ENCODE measurements at regions of chr7 and their contacts with region 1.

Region 1: DNA sequence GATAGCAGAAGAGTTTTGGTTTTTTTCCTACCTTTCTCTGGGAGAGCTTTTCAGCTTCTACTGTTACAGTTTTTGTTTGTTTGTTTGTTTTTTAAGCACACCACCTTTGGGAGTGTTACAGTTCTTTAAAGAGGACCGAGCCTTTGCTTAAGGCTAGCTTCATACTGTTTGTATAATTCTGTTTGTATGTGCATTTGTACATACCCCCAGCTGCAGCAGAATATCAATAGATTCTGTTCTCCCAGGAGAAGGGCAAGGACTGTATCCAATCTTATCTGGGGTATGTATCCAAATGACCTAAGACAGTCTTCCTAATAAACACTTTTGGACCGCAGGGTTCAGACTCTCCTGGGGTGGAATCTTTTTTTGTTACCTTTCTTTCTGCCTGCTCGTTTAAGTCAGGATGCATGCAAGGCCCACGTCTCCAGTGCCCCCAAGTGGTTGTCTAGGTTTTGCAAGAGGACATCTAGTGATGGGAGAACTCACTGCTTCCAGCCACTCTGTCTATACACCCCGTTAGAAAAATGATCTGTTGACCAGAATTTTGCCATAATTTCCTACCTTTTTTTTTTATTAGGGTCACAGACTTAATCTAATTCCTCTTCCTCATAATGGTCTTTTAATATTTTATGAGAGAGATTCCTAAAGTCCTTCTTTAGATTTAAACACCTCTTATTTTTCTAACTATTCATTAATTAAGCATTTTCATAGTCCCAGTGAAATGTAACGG is 23.9 kb downstream of the NRF1 start:
- DNase-seq: peak; percentile 70
- ATAC-seq: peak; percentile 87
- H3K4me3 ChIP-seq: no peak overlapping the region
- H3K4me3 Mint-ChIP-seq: no peak overlapping the region
- H3K27ac ChIP-seq: peak overlapping the region in 1 of 2 donors; percentile 5
- H3K27ac Mint-ChIP-seq: no peak overlapping the region
- H3K4me1 ChIP-seq: peaks cover 0 to 2% of the 10 kb centered on the region in 2 donors
- H3K4me1 Mint-ChIP-seq: peaks cover 22% of the 10 kb centered on the region
- H3K27me3 ChIP-seq: no peaks in the 10 kb centered on the region
- H3K27me3 Mint-ChIP-seq: no peaks in the 10 kb centered on the region
- CTCF ChIP-seq: peak; percentile 86

Region 2: GRCh38 chr7:129578829-129579228 is 56.6 kb before region 1 on chr7:
- CTCF ChIA-PET with region 1: interaction called, 5 read pairs
- POLR2A ChIA-PET with region 1: no interaction called
- intact Hi-C with region 1: loop called (anchors 2 kb)
- DNase-seq: no peak
- ATAC-seq: no peak
- H3K4me3 ChIP-seq: no peak overlapping the region
- H3K4me3 Mint-ChIP-seq: no peak overlapping the region
- H3K27ac ChIP-seq: no peak overlapping the region
- H3K27ac Mint-ChIP-seq: no peak overlapping the region
- H3K4me1 ChIP-seq: no peaks in the 10 kb centered on the region
- H3K4me1 Mint-ChIP-seq: no peaks in the 10 kb centered on the region
- H3K27me3 ChIP-seq: no peaks in the 10 kb centered on the region
- H3K27me3 Mint-ChIP-seq: no peaks in the 10 kb centered on the region
- CTCF ChIP-seq: no peak

Region 3: DNA sequence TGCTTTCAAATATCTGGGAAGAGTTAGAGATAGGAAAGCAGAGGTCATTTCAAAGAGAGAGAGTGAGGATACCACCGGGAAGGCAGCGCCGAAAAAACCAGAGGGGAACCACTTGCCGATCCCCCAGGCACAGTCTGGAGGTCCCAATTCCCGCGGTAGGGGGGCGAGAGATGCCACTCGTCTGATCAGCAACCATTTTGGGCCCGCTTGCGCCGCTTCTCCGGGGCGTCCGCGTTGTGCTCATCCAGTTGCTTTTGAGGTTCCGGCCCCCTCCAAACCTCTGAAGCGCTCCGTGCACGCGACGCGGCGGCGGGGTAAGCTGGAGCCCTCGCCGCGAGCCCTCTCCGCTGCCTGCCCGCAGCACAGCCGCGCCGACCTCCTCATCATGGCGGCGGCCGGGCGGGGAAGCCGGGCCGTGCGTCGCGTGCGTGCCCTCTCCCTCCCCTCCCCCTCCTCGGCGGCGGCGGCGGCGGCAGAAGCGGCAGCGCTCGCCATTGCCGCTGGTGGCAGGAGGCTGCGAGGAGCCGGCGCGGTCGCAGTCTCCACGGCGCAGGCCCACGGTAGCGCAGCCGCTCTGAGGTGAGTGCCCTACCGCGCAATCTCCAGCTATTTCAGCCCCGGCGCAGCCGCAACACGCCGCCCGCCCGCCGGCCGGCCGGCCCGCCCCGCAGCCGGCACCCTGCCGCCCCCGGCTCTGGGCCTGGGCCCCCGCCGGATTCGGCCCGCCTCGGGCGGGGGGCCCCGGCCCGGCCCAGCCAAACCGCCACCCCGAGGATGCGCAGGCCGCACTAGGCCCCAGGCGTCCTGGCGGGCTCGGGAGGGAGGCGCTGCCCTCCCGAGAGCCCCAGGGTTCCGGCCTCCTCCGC is 24.0 kb before region 1 on chr7 and contains the start of gene NRF1:
- CTCF ChIA-PET with region 1: interaction called, 9 read pairs
- POLR2A ChIA-PET with region 1: no interaction called
- intact Hi-C with region 1: loop called (anchors 1 kb)
- DNase-seq: peak; percentile 96
- ATAC-seq: peak; percentile 87
- H3K4me3 ChIP-seq: peak within 1 kb of the TSS; percentile 70 to 97 (median 84)
- H3K4me3 Mint-ChIP-seq: peak within 1 kb of the TSS; percentile 97
- H3K27ac ChIP-seq: peak within 1 kb of the TSS; percentile 91 to 93
- H3K27ac Mint-ChIP-seq: peak within 1 kb of the TSS; percentile 97
- H3K4me1 ChIP-seq: peaks cover 47 to 53% of the 10 kb centered on the region in 2 donors
- H3K4me1 Mint-ChIP-seq: peaks cover 67% of the 10 kb centered on the region
- H3K27me3 ChIP-seq: no peaks in the 10 kb centered on the region
- H3K27me3 Mint-ChIP-seq: no peaks in the 10 kb centered on the region
- CTCF ChIP-seq: no peak
- total RNA-seq, gene NRF1: 49.2 and 53.0 TPM in 2 replicates

Measured in B cell (primary cell).